CD8-positive, alpha-beta T cell (primary cell): ENCODE measurements at regions of chr1 and their contacts with region 1.

Region 1: GRCh38 chr1:206663832-206664652 is 20.7 kb upstream of the MAPKAPK2 start:
- DNase-seq: peak; percentile 46 to 83 (median 76)
- ATAC-seq: peak; percentile 94
- H3K4me3 ChIP-seq: no peak overlapping the region
- H3K4me3 Mint-ChIP-seq: no peak overlapping the region
- H3K27ac ChIP-seq: no peak overlapping the region
- H3K27ac Mint-ChIP-seq: no peak overlapping the region
- H3K4me1 ChIP-seq: peaks cover 5% of the 10 kb centered on the region
- H3K4me1 Mint-ChIP-seq: peaks cover 16% of the 10 kb centered on the region
- H3K27me3 ChIP-seq: peaks cover 0 to 7% of the 10 kb centered on the region in 2 experiments
- H3K27me3 Mint-ChIP-seq: peaks cover 21% of the 10 kb centered on the region
- CTCF ChIP-seq: peak; percentile 89

Region 2: GRCh38 chr1:206469933-206470691 is 193.9 kb before region 1 on chr1 and contains the start of gene IKBKE:
- CTCF ChIA-PET with region 1: interaction called, 79 read pairs
- POLR2A ChIA-PET with region 1: interaction called, 8 read pairs
- intact Hi-C with region 1: no loop called
- DNase-seq: peak in 7 of 9 experiments; percentile 29 to 77 (median 54)
- ATAC-seq: peak; percentile 49
- H3K4me3 ChIP-seq: peak within 1 kb of the TSS; percentile 89 to 98
- H3K4me3 Mint-ChIP-seq: peak within 1 kb of the TSS; percentile 91
- H3K27ac ChIP-seq: peak within 1 kb of the TSS; percentile 53 to 71
- H3K27ac Mint-ChIP-seq: peak within 1 kb of the TSS; percentile 91
- H3K4me1 ChIP-seq: peaks cover 67% of the 10 kb centered on the region
- H3K4me1 Mint-ChIP-seq: peaks cover 75% of the 10 kb centered on the region
- H3K27me3 ChIP-seq: no peaks in the 10 kb centered on the region
- H3K27me3 Mint-ChIP-seq: no peaks in the 10 kb centered on the region
- CTCF ChIP-seq: no peak
- total RNA-seq, gene IKBKE: 24.6 to 25.2 TPM

Region 3: GRCh38 chr1:206489980-206490770 is 173.9 kb before region 1 on chr1:
- CTCF ChIA-PET with region 1: interaction called, 62 read pairs
- POLR2A ChIA-PET with region 1: interaction called, 3 read pairs
- intact Hi-C with region 1: loop called in 1 of 2 experiments (anchors 1 kb)
- DNase-seq: peak; percentile 47 to 76 (median 71)
- ATAC-seq: peak; percentile 91
- H3K4me3 ChIP-seq: no peak overlapping the region
- H3K4me3 Mint-ChIP-seq: no peak overlapping the region
- H3K27ac ChIP-seq: no peak overlapping the region
- H3K27ac Mint-ChIP-seq: peak overlapping the region; percentile 18
- H3K4me1 ChIP-seq: no peaks in the 10 kb centered on the region
- H3K4me1 Mint-ChIP-seq: no peaks in the 10 kb centered on the region
- H3K27me3 ChIP-seq: no peaks in the 10 kb centered on the region
- H3K27me3 Mint-ChIP-seq: no peaks in the 10 kb centered on the region
- CTCF ChIP-seq: peak; percentile 67

Region 4: GRCh38 chr1:206544562-206545257 is 119.3 kb before region 1 on chr1:
- CTCF ChIA-PET with region 1: interaction called, 23 read pairs
- POLR2A ChIA-PET with region 1: no interaction called
- intact Hi-C with region 1: loop called (anchors 1 to 5 kb)
- DNase-seq: peak; percentile 71 to 93 (median 82)
- ATAC-seq: peak; percentile 95
- H3K4me3 ChIP-seq: no peak overlapping the region
- H3K4me3 Mint-ChIP-seq: no peak overlapping the region
- H3K27ac ChIP-seq: no peak overlapping the region
- H3K27ac Mint-ChIP-seq: no peak overlapping the region
- H3K4me1 ChIP-seq: peaks cover 9% of the 10 kb centered on the region
- H3K4me1 Mint-ChIP-seq: peaks cover 16% of the 10 kb centered on the region
- H3K27me3 ChIP-seq: no peaks in the 10 kb centered on the region
- H3K27me3 Mint-ChIP-seq: no peaks in the 10 kb centered on the region
- CTCF ChIP-seq: peak; percentile 95

Region 5: DNA sequence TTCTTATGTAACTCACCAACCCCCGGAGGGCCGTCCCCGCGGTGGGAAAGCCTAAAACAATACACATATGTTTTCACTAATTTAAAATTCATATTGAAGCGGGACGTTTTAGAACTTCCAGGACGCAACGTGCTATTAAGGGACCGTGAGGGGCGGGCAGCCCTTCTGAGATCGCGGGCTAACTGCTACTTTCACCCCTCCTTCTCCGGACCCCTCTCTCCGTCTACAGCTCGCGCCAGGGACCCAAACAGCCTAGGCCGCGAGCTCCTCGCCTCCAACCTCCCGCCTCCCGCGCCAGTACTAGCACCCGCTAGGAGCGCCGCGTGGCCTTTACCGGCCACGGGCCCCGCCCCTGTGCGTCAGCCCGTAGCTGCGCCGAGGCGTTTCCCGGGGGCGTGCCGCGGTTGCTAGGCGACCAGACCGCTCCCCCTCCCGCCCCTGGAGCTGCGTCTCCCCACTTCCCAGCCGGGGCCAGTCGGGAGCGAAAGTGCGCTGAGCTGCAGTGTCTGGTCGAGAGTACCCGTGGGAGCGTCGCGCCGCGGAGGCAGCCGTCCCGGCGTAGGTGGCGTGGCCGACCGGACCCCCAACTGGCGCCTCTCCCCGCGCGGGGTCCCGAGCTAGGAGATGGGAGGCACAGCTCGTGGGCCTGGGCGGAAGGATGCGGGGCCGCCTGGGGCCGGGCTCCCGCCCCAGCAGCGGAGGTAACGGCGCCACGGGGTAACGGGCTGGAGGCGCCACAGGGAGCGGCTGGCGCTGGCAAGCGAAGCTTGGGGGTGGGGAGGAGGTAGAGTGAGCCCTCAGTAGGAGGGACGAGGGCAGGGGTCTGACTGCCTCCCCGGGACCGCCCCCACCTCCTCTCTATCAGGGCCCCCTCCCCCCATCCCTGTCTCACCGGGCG is 28.7 kb before region 1 on chr1 and contains the start of gene DYRK3:
- CTCF ChIA-PET with region 1: interaction called, 274 read pairs
- POLR2A ChIA-PET with region 1: interaction called, 5 read pairs
- intact Hi-C with region 1: loop called (anchors 1 kb)
- DNase-seq: peak; percentile 63 to 94 (median 88)
- ATAC-seq: peak; percentile 94
- H3K4me3 ChIP-seq: peak within 1 kb of the TSS; percentile 58 to 79
- H3K4me3 Mint-ChIP-seq: peak within 1 kb of the TSS; percentile 85
- H3K27ac ChIP-seq: peak within 1 kb of the TSS; percentile 9 to 12
- H3K27ac Mint-ChIP-seq: peak within 1 kb of the TSS; percentile 70
- H3K4me1 ChIP-seq: peaks cover 15% of the 10 kb centered on the region
- H3K4me1 Mint-ChIP-seq: peaks cover 16% of the 10 kb centered on the region
- H3K27me3 ChIP-seq: no peaks in the 10 kb centered on the region
- H3K27me3 Mint-ChIP-seq: peaks cover 15% of the 10 kb centered on the region
- CTCF ChIP-seq: no peak
- total RNA-seq, gene DYRK3: 0.94 to 1.4 TPM

Region 6: GRCh38 chr1:206674745-206675175 is 10.7 kb after region 1 on chr1:
- CTCF ChIA-PET with region 1: interaction called, 30 read pairs
- POLR2A ChIA-PET with region 1: no interaction called
- intact Hi-C with region 1: no loop called
- DNase-seq: no peak
- ATAC-seq: no peak
- H3K4me3 ChIP-seq: no peak overlapping the region
- H3K4me3 Mint-ChIP-seq: no peak overlapping the region
- H3K27ac ChIP-seq: no peak overlapping the region
- H3K27ac Mint-ChIP-seq: no peak overlapping the region
- H3K4me1 ChIP-seq: no peaks in the 10 kb centered on the region
- H3K4me1 Mint-ChIP-seq: no peaks in the 10 kb centered on the region
- H3K27me3 ChIP-seq: no peaks in the 10 kb centered on the region
- H3K27me3 Mint-ChIP-seq: no peaks in the 10 kb centered on the region
- CTCF ChIP-seq: no peak

Region 7: DNA sequence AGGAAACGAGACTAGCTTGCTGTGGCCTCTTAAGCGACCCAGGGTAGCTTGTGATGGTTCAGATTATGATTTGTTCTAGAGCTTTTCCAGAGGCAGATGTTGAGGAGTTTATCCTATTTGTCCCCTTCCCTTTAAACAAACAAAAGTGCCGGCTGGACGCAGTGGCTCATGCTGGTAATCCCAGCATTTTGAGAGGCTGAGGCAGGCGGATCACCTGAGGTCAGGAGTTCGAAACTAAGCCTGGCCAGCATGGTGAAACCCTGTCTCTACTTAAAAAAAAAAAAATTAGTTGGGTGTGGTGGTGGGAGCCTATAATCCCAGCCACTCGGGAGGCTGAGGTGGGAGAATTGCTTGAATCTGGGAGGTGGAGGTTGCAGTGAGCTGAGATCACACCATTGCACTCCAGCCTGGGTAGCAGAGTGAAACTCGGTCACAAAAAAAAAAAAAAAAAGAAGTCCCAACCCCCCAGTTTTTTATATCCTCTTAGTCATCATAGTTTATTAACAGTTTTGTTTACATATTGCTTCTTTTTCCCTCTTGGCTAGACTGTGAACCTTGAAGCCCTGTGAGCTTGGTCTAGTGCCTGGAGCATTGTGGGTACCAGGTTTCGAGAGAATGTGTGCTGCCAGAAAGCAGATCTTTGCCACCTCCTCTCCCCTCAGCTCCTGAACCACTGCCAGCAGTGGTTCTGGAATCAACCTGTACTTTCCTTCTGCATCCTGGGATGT is 50.5 kb after region 1 on chr1:
- CTCF ChIA-PET with region 1: interaction called, 14 read pairs
- POLR2A ChIA-PET with region 1: no interaction called
- intact Hi-C with region 1: no loop called
- DNase-seq: peak in 3 of 9 experiments; percentile 58 to 82 (median 72)
- ATAC-seq: peak; percentile 62
- H3K4me3 ChIP-seq: no peak overlapping the region
- H3K4me3 Mint-ChIP-seq: peak overlapping the region; percentile 35
- H3K27ac ChIP-seq: peak overlapping the region in 1 of 2 experiments; percentile 69
- H3K27ac Mint-ChIP-seq: peak overlapping the region; percentile 95
- H3K4me1 ChIP-seq: peaks cover 58% of the 10 kb centered on the region
- H3K4me1 Mint-ChIP-seq: peaks cover 84% of the 10 kb centered on the region
- H3K27me3 ChIP-seq: no peaks in the 10 kb centered on the region
- H3K27me3 Mint-ChIP-seq: no peaks in the 10 kb centered on the region
- CTCF ChIP-seq: no peak

Region 8: DNA sequence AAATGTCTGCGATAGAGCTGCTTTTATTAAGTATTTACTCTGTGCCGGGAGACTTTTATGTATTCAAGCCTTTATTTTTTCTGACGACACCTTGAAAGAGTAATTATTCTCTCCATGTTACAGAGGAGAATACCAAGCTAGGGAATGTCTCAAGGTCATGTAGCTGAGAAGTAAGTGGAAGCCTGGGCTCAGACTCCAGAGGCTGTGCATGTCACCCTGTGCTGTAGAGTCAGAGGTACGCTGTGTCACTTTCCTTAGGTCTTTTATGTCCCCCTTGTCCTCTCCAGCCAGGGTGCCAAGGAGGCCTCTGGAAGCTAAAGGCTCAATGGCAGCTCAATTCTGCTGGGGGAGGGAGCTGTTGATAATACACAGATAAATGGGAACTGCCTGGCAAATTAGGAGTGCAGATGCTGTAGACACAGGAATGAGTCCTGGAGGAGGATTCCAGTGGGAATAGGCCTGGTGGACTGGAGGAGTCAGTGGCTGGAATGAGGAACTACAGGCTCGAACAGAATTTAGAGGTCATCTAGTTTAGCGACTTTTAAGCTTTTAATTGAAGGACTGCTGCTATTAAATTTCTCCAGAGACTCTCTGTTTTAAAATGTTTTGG is 97.2 kb after region 1 on chr1:
- CTCF ChIA-PET with region 1: no interaction called
- POLR2A ChIA-PET with region 1: no interaction called
- intact Hi-C with region 1: no loop called
- DNase-seq: no peak
- ATAC-seq: no peak
- H3K4me3 ChIP-seq: no peak overlapping the region
- H3K4me3 Mint-ChIP-seq: no peak overlapping the region
- H3K27ac ChIP-seq: no peak overlapping the region
- H3K27ac Mint-ChIP-seq: no peak overlapping the region
- H3K4me1 ChIP-seq: peaks cover 59% of the 10 kb centered on the region
- H3K4me1 Mint-ChIP-seq: peaks cover 33% of the 10 kb centered on the region
- H3K27me3 ChIP-seq: no peaks in the 10 kb centered on the region
- H3K27me3 Mint-ChIP-seq: no peaks in the 10 kb centered on the region
- CTCF ChIP-seq: no peak